Caco-2 (cell line): ENCODE measurements at regions of chr20 and their contacts with region 1.

Region 1: DNA sequence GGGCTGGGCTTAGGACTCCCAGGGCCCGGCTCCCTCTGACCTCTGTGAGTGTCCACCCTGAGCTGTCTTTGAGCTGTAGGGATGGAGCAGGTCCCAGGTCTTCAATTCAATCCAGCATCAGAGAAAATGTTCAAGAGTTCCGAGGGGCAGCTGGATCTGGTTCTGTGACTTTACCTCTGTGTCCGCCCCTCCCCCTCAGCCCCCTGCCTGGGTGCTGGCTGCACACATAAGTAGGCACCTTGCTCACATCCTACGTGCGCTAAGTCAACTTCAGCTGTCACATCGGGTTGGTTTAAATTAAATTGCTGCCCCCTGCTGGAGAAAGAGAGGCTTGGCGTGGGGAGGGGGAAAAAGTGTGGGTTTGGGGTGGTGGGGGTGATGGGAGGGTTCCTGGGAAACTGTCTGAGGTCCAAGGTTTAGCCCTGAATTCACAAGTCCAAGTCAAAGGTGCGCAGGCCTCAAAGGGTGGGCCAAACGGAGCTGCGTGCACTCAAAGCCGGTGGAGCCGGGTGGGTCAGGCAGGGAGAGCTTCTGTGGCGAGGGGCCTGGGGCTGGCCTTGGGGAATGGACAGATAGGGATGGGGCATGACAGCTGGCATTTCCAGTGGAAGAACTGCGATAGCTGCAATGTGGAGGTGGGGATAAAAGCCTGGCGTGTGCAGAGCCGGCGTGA is 3.0 kb downstream of the WFDC5 start:
- DNase-seq: peak in 1 of 2 experiments; percentile 53
- H3K4me3 ChIP-seq: no peak overlapping the region
- H3K4me3 Mint-ChIP-seq: no peak overlapping the region
- H3K27ac Mint-ChIP-seq: no peak overlapping the region
- H3K4me1 ChIP-seq: no peaks in the 10 kb centered on the region
- H3K4me1 Mint-ChIP-seq: peaks cover 6% of the 10 kb centered on the region
- H3K27me3 ChIP-seq: no peaks in the 10 kb centered on the region
- H3K27me3 Mint-ChIP-seq: peaks cover 4% of the 10 kb centered on the region
- CTCF ChIP-seq: peak; percentile 64 to 83

Region 2: DNA sequence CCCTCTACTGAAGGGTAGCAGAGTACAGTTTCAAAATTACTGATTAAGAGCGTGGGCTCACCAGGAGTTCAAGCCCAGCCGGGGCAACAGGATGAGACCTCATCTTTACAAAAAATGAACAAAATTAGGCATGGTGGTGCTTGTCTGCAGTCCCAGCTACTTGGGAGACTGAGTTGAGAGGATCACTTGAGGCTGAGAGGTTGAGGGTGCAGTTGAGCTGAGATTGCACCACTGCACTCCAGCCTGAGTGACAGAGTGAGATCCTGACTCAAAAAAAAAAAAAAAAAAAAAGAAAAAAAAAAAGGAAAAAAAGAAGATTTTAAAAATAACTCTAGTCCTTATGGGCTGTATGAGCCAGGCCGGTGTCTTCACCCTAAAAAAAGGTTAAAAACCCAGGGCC is 183.3 kb before region 1 on chr20:
- CTCF ChIA-PET with region 1: no interaction called
- POLR2A ChIA-PET with region 1: interaction called, 13 read pairs
- intact Hi-C with region 1: no loop called
- DNase-seq: no peak
- H3K4me3 ChIP-seq: no peak overlapping the region
- H3K4me3 Mint-ChIP-seq: no peak overlapping the region
- H3K27ac Mint-ChIP-seq: no peak overlapping the region
- H3K4me1 ChIP-seq: no peaks in the 10 kb centered on the region
- H3K4me1 Mint-ChIP-seq: no peaks in the 10 kb centered on the region
- H3K27me3 ChIP-seq: no peaks in the 10 kb centered on the region
- H3K27me3 Mint-ChIP-seq: no peaks in the 10 kb centered on the region
- CTCF ChIP-seq: no peak

Region 3: DNA sequence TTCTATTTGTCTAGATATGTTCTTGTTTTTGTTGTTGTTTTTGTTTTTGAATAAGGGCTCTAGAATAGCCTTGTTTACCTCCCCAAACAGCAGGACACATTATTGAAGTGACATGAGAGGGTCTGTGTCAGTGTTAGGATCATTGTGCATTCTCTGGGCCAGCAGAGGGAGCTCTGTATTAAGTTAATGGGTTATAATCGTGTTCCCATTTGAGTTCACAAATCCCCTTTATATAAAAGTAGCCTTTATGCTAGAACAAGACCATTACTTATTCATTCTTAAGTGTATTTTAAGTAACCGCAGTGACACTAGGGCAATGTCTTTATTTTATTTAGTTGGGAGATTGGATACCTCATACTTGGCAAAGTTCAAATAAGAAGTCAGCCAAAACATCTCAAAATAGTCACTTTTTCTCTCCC is 100.8 kb before region 1 on chr20:
- CTCF ChIA-PET with region 1: interaction called, 16 read pairs
- POLR2A ChIA-PET with region 1: no interaction called
- intact Hi-C with region 1: loop called (anchors 1 kb)
- DNase-seq: peak; percentile 70 to 80
- H3K4me3 ChIP-seq: no peak overlapping the region
- H3K4me3 Mint-ChIP-seq: no peak overlapping the region
- H3K27ac Mint-ChIP-seq: peak overlapping the region; percentile 1
- H3K4me1 ChIP-seq: peaks cover 44% of the 10 kb centered on the region
- H3K4me1 Mint-ChIP-seq: peaks cover 40% of the 10 kb centered on the region
- H3K27me3 ChIP-seq: no peaks in the 10 kb centered on the region
- H3K27me3 Mint-ChIP-seq: no peaks in the 10 kb centered on the region
- CTCF ChIP-seq: peak; percentile 89 to 96

Region 4: GRCh38 chr20:45028424-45029136 is 83.4 kb before region 1 on chr20:
- CTCF ChIA-PET with region 1: no interaction called
- POLR2A ChIA-PET with region 1: no interaction called
- intact Hi-C with region 1: no loop called
- DNase-seq: no peak
- H3K4me3 ChIP-seq: no peak overlapping the region
- H3K4me3 Mint-ChIP-seq: no peak overlapping the region
- H3K27ac Mint-ChIP-seq: no peak overlapping the region
- H3K4me1 ChIP-seq: no peaks in the 10 kb centered on the region
- H3K4me1 Mint-ChIP-seq: no peaks in the 10 kb centered on the region
- H3K27me3 ChIP-seq: no peaks in the 10 kb centered on the region
- H3K27me3 Mint-ChIP-seq: no peaks in the 10 kb centered on the region
- CTCF ChIP-seq: no peak

Region 5: DNA sequence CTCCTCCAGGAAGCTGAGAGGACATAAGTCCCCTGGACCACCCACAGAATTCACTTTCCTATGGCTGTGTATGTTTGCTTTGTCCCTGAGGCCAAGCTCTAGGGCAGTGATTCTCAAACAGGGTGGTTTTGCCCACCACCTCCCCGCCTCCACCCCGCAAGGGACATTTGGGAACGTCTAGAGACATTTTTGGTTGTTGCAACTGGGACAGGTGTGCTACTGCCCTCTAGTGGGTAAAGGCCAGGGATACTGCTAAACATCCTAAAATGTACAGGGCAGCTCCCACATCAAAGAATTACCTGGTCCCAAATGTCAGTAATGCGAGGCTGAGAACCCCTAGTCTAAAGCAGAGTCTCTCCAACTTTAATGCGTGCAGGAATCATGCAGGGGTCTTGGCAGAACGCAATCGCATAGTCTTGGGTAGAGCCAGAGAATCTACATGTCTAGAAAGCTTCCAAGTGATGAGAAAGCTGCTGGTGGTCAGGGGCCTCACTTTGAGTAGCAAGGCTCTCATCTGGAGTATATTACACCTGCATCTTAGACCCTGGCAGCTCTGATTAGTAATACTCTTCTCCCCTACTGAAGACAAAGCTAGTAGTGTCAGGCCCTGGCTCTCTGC is 16.1 kb before region 1 on chr20:
- CTCF ChIA-PET with region 1: interaction called, 42 read pairs
- POLR2A ChIA-PET with region 1: no interaction called
- intact Hi-C with region 1: no loop called
- DNase-seq: peak; percentile 84 to 87
- H3K4me3 ChIP-seq: no peak overlapping the region
- H3K4me3 Mint-ChIP-seq: no peak overlapping the region
- H3K27ac Mint-ChIP-seq: no peak overlapping the region
- H3K4me1 ChIP-seq: no peaks in the 10 kb centered on the region
- H3K4me1 Mint-ChIP-seq: no peaks in the 10 kb centered on the region
- H3K27me3 ChIP-seq: no peaks in the 10 kb centered on the region
- H3K27me3 Mint-ChIP-seq: no peaks in the 10 kb centered on the region
- CTCF ChIP-seq: peak; percentile 95 to 99

Region 6: DNA sequence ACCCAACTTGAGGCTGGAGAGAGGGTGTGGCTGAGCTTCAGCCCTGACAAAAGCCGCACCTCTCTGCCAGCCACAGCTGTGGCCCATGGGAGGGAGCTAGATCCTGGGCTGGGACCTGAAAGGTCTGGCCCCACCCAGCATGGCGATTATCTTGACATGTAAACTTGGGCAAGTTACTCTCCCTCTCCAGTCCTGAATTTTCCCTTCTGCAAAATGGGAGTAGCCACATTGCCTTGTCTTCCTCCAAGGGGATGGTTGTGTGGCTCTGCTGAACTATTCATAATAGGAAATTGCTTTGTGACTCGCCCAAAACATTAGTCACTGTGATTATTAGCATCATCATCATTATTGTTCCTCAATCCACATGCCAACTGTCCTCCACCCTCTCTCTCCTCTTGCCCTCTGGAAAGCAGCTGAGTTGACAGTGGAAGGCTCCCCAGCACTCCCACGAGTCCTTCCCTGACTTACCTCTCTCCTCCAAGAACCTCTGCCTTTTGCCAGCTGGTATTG is 171.7 kb after region 1 on chr20:
- CTCF ChIA-PET with region 1: no interaction called
- POLR2A ChIA-PET with region 1: no interaction called
- intact Hi-C with region 1: no loop called
- DNase-seq: no peak
- H3K4me3 ChIP-seq: no peak overlapping the region
- H3K4me3 Mint-ChIP-seq: no peak overlapping the region
- H3K27ac Mint-ChIP-seq: no peak overlapping the region
- H3K4me1 ChIP-seq: no peaks in the 10 kb centered on the region
- H3K4me1 Mint-ChIP-seq: no peaks in the 10 kb centered on the region
- H3K27me3 ChIP-seq: no peaks in the 10 kb centered on the region; the same call in 1 of the 2 replicates
- H3K27me3 Mint-ChIP-seq: peaks cover 34% of the 10 kb centered on the region
- CTCF ChIP-seq: no peak